ENCODE measurements at regions of chr20 and their contacts with region 1.

Region 1: GRCh38 chr20:25489221-25489863 is 81.9 kb downstream of the GINS1 start:
- DNase-seq: no peak
- ATAC-seq: no peak
- H3K4me3 ChIP-seq: no peak overlapping the region
- H3K27ac ChIP-seq: no peak overlapping the region
- H3K4me1 ChIP-seq: no peaks in the 10 kb centered on the region
- CTCF ChIP-seq: no peak
- EP300 ChIP-seq: no peak
- POLR2A ChIP-seq: no peak
- RAD21 ChIP-seq: no peak

Region 2: DNA sequence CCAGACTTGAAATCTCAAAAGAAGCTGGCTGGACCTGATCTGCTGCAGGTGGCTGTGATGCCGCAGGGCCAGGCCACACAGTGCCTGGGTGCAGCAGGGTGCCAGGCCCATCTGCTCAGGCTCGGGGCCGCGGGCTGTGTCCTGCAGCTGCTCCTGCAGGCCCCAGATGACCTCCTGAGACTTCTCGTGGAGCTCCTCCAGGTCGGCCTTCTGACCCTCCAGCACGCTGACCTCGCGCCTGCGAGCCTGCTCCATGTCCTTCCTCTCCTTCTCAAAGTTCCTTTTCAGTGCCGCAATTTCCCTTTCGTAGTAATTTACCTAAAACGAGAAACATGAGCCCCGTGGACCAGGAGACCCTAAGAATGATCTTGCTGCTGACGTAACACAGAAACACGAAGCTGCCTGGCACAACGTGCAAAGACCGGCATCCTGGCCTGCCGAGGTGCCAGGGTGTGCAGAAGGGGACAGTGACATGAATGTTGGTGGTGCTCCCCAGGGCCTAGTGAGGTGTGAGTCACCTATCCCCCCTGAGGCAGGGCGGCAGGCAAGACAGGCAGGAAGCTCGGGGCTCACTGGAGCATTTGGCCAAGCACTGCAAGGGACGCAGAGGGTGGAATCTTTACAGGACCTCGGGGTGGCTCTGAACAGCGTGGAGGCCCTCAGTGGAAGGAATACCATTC is 10.3 kb before region 1 on chr20:
- CTCF ChIA-PET with region 1: interaction called, 13 read pairs
- POLR2A ChIA-PET with region 1: interaction called, 3 read pairs
- DNase-seq: no peak
- ATAC-seq: no peak
- H3K4me3 ChIP-seq: no peak overlapping the region
- H3K27ac ChIP-seq: no peak overlapping the region
- H3K4me1 ChIP-seq: no peaks in the 10 kb centered on the region
- CTCF ChIP-seq: no peak
- EP300 ChIP-seq: no peak
- POLR2A ChIP-seq: no peak
- RAD21 ChIP-seq: no peak

Measured in A549 (cell line).